Activated CD4-positive, alpha-beta T cell treated with anti-CD3 and anti-CD28 coated beads, Interleukin-2, amount 10 ng/mL, durations not matched to agents 24 days and 14 days (primary cell): ENCODE measurements at regions of chr19 and their contacts with region 1.

Region 1: GRCh38 chr19:1905071-1905862 is at the starts of genes ADAT3 and SCAMP4:
- DNase-seq: peak; percentile 100
- H3K4me3 Mint-ChIP-seq: peak within 1 kb of the TSS; percentile 94
- H3K27ac Mint-ChIP-seq: peak within 1 kb of the TSS; percentile 91
- H3K4me1 Mint-ChIP-seq: peaks cover 34% of the 10 kb centered on the region
- H3K27me3 Mint-ChIP-seq: no peaks in the 10 kb centered on the region
- total RNA-seq, gene ADAT3: 8.8 and 10.6 TPM in 2 replicates
- total RNA-seq, gene SCAMP4: 39.2 and 42.4 TPM in 2 replicates

Region 2: DNA sequence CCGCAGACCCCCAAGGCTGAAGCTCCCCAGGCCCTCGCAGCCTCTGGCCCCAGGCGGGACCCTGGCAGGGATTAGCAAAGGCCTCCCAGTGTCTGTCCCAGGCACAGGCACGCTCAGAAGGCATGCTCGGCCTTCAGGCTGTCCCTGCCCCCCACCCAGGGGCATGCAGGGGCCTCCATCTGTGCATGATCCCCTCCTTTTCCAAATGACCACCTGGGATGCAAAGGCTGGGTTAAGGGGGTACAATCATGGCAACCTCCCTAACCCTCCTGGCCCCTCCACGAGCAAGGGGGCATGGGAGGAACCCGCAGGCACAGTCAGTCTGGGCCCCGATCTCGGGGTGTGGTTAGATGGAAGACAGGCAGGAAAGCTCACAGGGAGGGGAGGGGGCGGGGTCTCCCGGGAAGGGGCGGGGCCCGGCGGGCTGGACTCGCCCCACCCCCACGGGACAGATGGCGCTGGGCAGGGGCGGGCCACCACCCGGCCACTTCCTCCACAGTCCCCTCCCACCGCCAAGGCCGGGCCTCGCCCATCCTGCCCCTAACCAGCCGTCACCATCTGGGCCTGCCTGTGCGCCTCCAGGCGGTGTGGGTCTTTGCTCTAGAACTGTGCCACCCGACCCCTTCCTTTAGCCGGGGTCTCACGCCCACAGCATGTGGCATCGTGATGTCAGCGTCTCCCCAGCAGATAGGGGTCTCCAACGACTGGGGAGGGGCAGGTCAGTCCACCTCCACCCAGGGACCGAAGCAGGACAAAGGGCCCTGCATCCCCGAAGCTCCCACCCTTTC is 50.0 kb before region 1 on chr19:
- intact Hi-C with region 1: loop called (anchors 2 kb)
- DNase-seq: peak; percentile 97
- H3K4me3 Mint-ChIP-seq: peak overlapping the region; percentile 84
- H3K27ac Mint-ChIP-seq: peak overlapping the region; percentile 89
- H3K4me1 Mint-ChIP-seq: peaks cover 35% of the 10 kb centered on the region
- H3K27me3 Mint-ChIP-seq: no peaks in the 10 kb centered on the region

Region 3: DNA sequence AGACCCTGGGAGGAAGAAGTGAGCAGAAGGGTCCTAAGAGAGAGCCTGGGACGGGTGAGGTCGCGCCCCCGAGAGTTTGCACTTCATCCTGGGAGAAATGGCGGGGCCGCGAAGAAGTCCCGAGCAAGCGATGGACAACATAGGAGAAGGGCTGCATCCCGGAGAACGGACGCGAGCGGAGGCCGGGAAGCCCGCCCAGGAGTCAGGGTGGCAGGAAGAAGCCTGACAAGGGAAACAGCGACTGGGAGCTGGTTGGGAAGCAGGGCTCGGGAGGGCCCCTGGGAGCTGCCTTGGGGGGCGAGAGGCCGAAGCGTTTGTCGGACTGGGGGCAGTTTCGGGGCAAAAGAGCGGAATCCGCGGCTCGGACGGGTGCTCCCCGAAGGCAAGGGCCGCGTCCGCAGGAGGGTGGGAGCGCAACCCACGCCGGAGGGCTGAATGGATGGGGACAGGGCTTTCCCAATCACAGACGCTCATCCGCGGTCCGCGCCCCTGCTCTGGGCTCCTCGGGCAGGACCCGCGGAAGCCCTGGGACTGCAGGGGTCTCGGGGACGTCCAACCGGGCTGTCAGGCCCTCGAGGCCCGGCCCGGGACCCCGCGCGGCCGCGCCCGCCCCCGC is 20.4 kb before region 1 on chr19:
- intact Hi-C with region 1: loop called (anchors 1 kb)
- DNase-seq: peak; percentile 75
- H3K4me3 Mint-ChIP-seq: peak overlapping the region; percentile 93
- H3K27ac Mint-ChIP-seq: peak overlapping the region; percentile 96
- H3K4me1 Mint-ChIP-seq: peaks cover 30% of the 10 kb centered on the region
- H3K27me3 Mint-ChIP-seq: no peaks in the 10 kb centered on the region

Region 4: DNA sequence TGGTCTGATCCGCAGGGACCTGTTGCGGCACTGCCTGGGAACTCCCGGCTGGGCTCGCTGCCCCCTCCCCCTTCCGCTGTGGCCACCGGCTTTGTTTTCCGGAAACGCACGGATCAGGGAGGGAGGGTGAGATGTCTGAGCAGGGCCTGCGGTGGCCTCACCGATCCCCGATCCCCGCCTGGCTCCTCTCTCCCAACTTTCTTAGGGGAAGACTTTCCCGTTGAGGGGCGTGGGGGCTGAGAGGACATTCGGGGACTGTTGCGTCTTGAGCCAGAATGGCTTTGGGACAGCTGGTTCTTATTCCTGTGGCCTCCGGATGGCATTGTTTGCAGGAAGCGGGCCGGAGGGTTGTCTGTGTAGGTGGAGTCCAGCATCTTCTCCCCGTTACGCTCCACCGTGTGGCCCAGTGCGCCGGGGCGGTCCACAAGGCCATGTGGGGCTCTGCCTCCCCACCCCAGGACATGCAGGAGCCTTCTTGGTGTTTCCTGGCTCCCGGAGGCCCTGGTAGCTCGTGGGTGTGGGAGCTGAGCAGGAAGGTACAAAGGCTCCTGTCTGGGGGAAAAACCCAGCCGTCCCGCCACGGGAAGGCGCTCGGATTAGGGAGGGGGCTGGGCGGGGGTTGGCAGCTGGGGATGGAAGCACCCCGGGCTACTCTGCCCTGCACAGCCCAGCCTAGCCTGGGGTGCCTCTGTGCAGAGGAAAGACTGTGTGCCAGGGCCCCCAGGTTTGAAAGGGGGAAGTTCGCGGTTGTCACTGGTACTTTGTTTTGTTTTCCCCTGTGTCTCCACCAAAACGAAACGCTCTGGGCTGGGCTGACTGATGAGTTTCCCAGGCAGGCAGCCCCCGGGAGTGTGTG is 37.0 kb after region 1 on chr19:
- intact Hi-C with region 1: loop called (anchors 1 kb)
- DNase-seq: peak; percentile 95
- H3K4me3 Mint-ChIP-seq: peak overlapping the region; percentile 92
- H3K27ac Mint-ChIP-seq: peak overlapping the region; percentile 93
- H3K4me1 Mint-ChIP-seq: peaks cover 30% of the 10 kb centered on the region
- H3K27me3 Mint-ChIP-seq: no peaks in the 10 kb centered on the region